ENCODE measurements at regions of chr15 and their contacts with region 1.

Region 1: DNA sequence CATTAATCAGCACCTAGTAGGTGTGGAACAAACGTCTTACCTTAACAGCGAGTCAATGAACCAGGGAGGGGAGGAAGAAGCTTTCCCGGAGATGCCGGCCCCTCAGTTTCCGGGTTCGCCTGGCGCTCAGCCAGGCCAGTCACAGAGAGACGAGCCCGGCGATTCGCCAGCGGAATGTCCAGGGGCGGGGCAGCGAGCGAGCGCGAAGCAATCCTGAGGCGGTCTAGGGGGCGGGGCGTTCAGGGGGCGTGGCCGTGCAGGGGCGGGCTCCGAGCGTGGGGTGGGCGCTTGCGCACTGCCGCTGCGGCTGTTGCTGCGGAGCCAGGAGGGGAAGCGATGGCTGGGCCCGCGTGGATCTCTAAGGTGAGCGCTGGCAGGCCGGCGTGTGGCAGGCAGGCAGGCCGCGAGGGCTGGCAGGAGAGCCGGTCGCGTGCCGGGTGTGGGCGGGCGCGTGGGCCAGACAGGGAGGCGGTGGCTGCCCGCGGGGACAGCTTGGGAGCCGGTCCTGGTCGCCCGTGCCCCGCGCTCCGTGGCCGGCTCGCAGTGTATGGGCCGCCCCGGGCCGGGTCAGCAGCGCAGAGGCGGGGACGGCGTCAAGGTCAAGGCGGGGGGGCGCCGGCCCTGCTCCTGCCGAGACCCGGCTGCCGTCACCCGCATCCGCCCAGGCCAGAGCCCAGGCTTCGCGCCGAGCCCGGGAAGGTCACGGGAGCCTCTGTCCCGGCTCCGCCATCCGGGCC is at the start of gene IDH3A:
- DNase-seq: peak; percentile 99 to 100 (median 100)
- ATAC-seq: peak; percentile 97
- H3K4me3 ChIP-seq: peak within 1 kb of the TSS; percentile 72 to 81
- H3K4me3 Mint-ChIP-seq: peak within 1 kb of the TSS; percentile 91
- H3K27ac ChIP-seq: peak within 1 kb of the TSS; percentile 65 to 67
- H3K27ac Mint-ChIP-seq: peak within 1 kb of the TSS; percentile 91
- H3K4me1 ChIP-seq: peaks cover 18% of the 10 kb centered on the region
- H3K4me1 Mint-ChIP-seq: peaks cover 44% of the 10 kb centered on the region
- H3K27me3 ChIP-seq: no peaks in the 10 kb centered on the region
- H3K27me3 Mint-ChIP-seq: no peaks in the 10 kb centered on the region
- CTCF ChIP-seq: no peak
- total RNA-seq, gene IDH3A: 54.4 to 61.0 TPM

Region 2: DNA sequence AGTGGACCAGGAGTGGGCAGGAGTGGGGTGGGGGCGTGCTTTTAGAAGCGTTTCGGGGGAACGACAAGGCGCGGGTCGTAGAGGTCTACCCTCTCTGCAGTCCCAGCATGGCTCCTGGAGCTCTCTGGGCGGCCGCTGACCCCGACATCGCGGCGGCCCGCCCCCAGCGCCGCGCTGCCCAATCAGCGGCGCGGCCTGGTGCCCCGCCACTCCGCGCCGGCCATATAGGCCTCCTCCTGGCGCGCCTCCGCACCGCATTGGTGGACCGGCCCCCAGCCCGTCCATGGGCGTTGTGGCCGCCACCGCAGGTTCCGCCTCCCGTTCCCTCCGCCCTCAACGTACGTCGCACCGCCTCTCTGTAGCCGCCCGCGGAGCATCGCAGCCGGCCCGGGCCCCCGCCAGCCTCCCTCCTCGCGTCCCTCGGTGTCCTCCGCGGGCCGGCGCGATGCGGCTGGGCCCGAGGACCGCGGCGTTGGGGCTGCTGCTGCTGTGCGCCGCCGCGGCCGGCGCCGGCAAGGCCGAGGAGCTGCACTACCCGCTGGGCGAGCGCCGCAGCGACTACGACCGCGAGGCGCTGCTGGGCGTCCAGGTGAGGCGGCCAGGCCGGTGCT is 1217.7 kb before region 1 on chr15 and contains the start of gene RCN2:
- CTCF ChIA-PET with region 1: no interaction called
- POLR2A ChIA-PET with region 1: no interaction called
- intact Hi-C with region 1: loop called in 1 of 2 experiments (anchors 5 kb)
- DNase-seq: peak; percentile 81 to 96 (median 93)
- ATAC-seq: peak; percentile 97
- H3K4me3 ChIP-seq: peak within 1 kb of the TSS; percentile 62 to 63
- H3K4me3 Mint-ChIP-seq: peak within 1 kb of the TSS; percentile 90
- H3K27ac ChIP-seq: peak within 1 kb of the TSS; percentile 63 to 65
- H3K27ac Mint-ChIP-seq: peak within 1 kb of the TSS; percentile 91
- H3K4me1 ChIP-seq: peaks cover 24% of the 10 kb centered on the region
- H3K4me1 Mint-ChIP-seq: peaks cover 34% of the 10 kb centered on the region
- H3K27me3 ChIP-seq: no peaks in the 10 kb centered on the region
- H3K27me3 Mint-ChIP-seq: no peaks in the 10 kb centered on the region
- CTCF ChIP-seq: no peak
- total RNA-seq, gene RCN2: 25.9 to 29.7 TPM

Region 3: GRCh38 chr15:77988347-77989295 is 160.6 kb before region 1 on chr15:
- CTCF ChIA-PET with region 1: no interaction called
- POLR2A ChIA-PET with region 1: no interaction called
- intact Hi-C with region 1: no loop called
- DNase-seq: no peak
- ATAC-seq: no peak
- H3K4me3 ChIP-seq: no peak overlapping the region
- H3K4me3 Mint-ChIP-seq: no peak overlapping the region
- H3K27ac ChIP-seq: no peak overlapping the region
- H3K27ac Mint-ChIP-seq: no peak overlapping the region
- H3K4me1 ChIP-seq: peaks cover 13% of the 10 kb centered on the region
- H3K4me1 Mint-ChIP-seq: peaks cover 25% of the 10 kb centered on the region
- H3K27me3 ChIP-seq: no peaks in the 10 kb centered on the region
- H3K27me3 Mint-ChIP-seq: no peaks in the 10 kb centered on the region
- CTCF ChIP-seq: no peak

Region 4: DNA sequence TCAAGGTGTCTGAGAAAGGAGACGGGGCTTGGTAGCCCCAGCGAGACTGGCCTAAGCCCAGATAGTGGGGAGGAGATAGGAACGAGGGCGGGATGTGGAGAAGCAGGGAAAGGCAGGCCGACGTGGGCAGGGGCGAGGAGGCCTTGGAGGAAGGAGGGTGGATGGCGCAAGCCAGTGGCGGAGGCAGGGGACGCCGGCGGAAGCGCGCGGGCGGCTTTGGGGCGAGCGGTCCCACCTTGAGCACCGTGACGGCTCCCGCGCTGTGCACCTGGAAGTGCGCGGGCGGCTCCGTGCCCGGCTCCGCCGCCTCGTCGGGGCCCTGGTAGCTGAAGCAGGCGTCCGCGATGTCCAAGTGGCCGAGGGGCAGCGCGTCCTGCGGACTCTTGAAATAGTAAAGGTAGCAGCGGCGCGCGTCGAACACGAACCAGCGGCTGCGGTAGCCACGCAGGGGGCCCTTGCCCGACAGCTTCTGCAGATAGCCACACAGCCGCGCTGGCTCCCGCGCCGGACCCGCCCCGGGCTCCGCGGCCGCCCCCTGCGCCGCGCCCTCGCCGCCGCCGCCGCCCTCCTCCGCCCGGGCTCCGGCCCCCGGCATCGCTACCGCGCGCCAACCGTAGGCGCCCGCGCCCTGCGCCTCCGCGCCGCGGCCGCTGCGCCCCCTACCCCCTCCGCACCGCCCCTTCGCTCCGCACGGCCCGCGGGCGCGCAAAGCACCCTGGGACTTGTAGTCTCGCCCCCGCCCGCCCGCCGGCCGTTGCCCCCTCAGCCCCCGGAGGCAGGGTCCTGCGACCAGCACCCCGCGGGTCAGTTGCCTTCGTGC is 72.0 kb before region 1 on chr15 and contains the start of gene TBC1D2B:
- CTCF ChIA-PET with region 1: no interaction called
- POLR2A ChIA-PET with region 1: no interaction called
- intact Hi-C with region 1: loop called (anchors 1 kb)
- DNase-seq: peak in 8 of 9 experiments; percentile 56 to 86 (median 71)
- ATAC-seq: peak; percentile 80
- H3K4me3 ChIP-seq: peak within 1 kb of the TSS; percentile 87 to 90
- H3K4me3 Mint-ChIP-seq: peak within 1 kb of the TSS; percentile 100
- H3K27ac ChIP-seq: peak within 1 kb of the TSS; percentile 57 to 76
- H3K27ac Mint-ChIP-seq: peak within 1 kb of the TSS; percentile 99
- H3K4me1 ChIP-seq: peaks cover 35% of the 10 kb centered on the region
- H3K4me1 Mint-ChIP-seq: peaks cover 46% of the 10 kb centered on the region
- H3K27me3 ChIP-seq: no peaks in the 10 kb centered on the region
- H3K27me3 Mint-ChIP-seq: no peaks in the 10 kb centered on the region
- CTCF ChIP-seq: no peak
- total RNA-seq, gene TBC1D2B: 88.7 to 101 TPM

Region 5: GRCh38 chr15:78120523-78120922 is 28.7 kb before region 1 on chr15:
- CTCF ChIA-PET with region 1: no interaction called
- POLR2A ChIA-PET with region 1: no interaction called
- intact Hi-C with region 1: no loop called
- DNase-seq: no peak
- ATAC-seq: no peak
- H3K4me3 ChIP-seq: no peak overlapping the region
- H3K4me3 Mint-ChIP-seq: no peak overlapping the region
- H3K27ac ChIP-seq: no peak overlapping the region
- H3K27ac Mint-ChIP-seq: no peak overlapping the region
- H3K4me1 ChIP-seq: no peaks in the 10 kb centered on the region
- H3K4me1 Mint-ChIP-seq: no peaks in the 10 kb centered on the region
- H3K27me3 ChIP-seq: no peaks in the 10 kb centered on the region
- H3K27me3 Mint-ChIP-seq: no peaks in the 10 kb centered on the region
- CTCF ChIP-seq: no peak

Region 6: GRCh38 chr15:78264304-78265136 is 115.3 kb after region 1 on chr15 and contains the start of gene DNAJA4:
- CTCF ChIA-PET with region 1: no interaction called
- POLR2A ChIA-PET with region 1: no interaction called
- intact Hi-C with region 1: loop called in 1 of 2 experiments (anchors 1 kb)
- DNase-seq: peak; percentile 29 to 81 (median 63)
- ATAC-seq: peak; percentile 78
- H3K4me3 ChIP-seq: peak within 1 kb of the TSS; percentile 54 to 71
- H3K4me3 Mint-ChIP-seq: peak within 1 kb of the TSS; percentile 91
- H3K27ac ChIP-seq: peak within 1 kb of the TSS; percentile 67 to 77
- H3K27ac Mint-ChIP-seq: peak within 1 kb of the TSS; percentile 96
- H3K4me1 ChIP-seq: peaks cover 15% of the 10 kb centered on the region
- H3K4me1 Mint-ChIP-seq: peaks cover 37% of the 10 kb centered on the region
- H3K27me3 ChIP-seq: no peaks in the 10 kb centered on the region
- H3K27me3 Mint-ChIP-seq: no peaks in the 10 kb centered on the region
- CTCF ChIP-seq: no peak
- total RNA-seq, gene DNAJA4: 48.9 to 52.1 TPM

Region 7: GRCh38 chr15:78299101-78299930 is 150.1 kb after region 1 on chr15 and contains the start of gene SKIC8:
- CTCF ChIA-PET with region 1: no interaction called
- POLR2A ChIA-PET with region 1: interaction called, 4 read pairs
- intact Hi-C with region 1: loop called in 1 of 2 experiments (anchors 1 kb)
- DNase-seq: peak; percentile 80 to 95 (median 89)
- ATAC-seq: peak; percentile 98
- H3K4me3 ChIP-seq: peak within 1 kb of the TSS; percentile 89 to 99
- H3K4me3 Mint-ChIP-seq: peak within 1 kb of the TSS; percentile 98
- H3K27ac ChIP-seq: peak within 1 kb of the TSS; percentile 73 to 84
- H3K27ac Mint-ChIP-seq: peak within 1 kb of the TSS; percentile 96
- H3K4me1 ChIP-seq: peaks cover 12% of the 10 kb centered on the region
- H3K4me1 Mint-ChIP-seq: peaks cover 34% of the 10 kb centered on the region
- H3K27me3 ChIP-seq: no peaks in the 10 kb centered on the region
- H3K27me3 Mint-ChIP-seq: no peaks in the 10 kb centered on the region
- CTCF ChIP-seq: no peak
- total RNA-seq, gene SKIC8: 18.4 to 21.2 TPM

Region 8: GRCh38 chr15:78399091-78399490 is 249.9 kb after region 1 on chr15:
- CTCF ChIA-PET with region 1: no interaction called
- POLR2A ChIA-PET with region 1: no interaction called
- intact Hi-C with region 1: no loop called
- DNase-seq: no peak
- ATAC-seq: no peak
- H3K4me3 ChIP-seq: no peak overlapping the region
- H3K4me3 Mint-ChIP-seq: no peak overlapping the region
- H3K27ac ChIP-seq: no peak overlapping the region
- H3K27ac Mint-ChIP-seq: no peak overlapping the region
- H3K4me1 ChIP-seq: no peaks in the 10 kb centered on the region
- H3K4me1 Mint-ChIP-seq: no peaks in the 10 kb centered on the region
- H3K27me3 ChIP-seq: no peaks in the 10 kb centered on the region
- H3K27me3 Mint-ChIP-seq: peaks cover 5% of the 10 kb centered on the region
- CTCF ChIP-seq: no peak

Region 9: GRCh38 chr15:78540141-78540928 is 391.1 kb after region 1 on chr15 and contains the start of gene PSMA4:
- CTCF ChIA-PET with region 1: no interaction called
- POLR2A ChIA-PET with region 1: no interaction called
- intact Hi-C with region 1: loop called in 1 of 2 experiments (anchors 10 kb)
- DNase-seq: peak; percentile 86 to 98 (median 95)
- ATAC-seq: peak; percentile 83
- H3K4me3 ChIP-seq: peak within 1 kb of the TSS; percentile 85 to 96
- H3K4me3 Mint-ChIP-seq: peak within 1 kb of the TSS; percentile 88
- H3K27ac ChIP-seq: peak within 1 kb of the TSS; percentile 89 to 97
- H3K27ac Mint-ChIP-seq: peak within 1 kb of the TSS; percentile 95
- H3K4me1 ChIP-seq: peaks cover 28% of the 10 kb centered on the region
- H3K4me1 Mint-ChIP-seq: peaks cover 31% of the 10 kb centered on the region
- H3K27me3 ChIP-seq: no peaks in the 10 kb centered on the region
- H3K27me3 Mint-ChIP-seq: no peaks in the 10 kb centered on the region
- CTCF ChIP-seq: no peak
- total RNA-seq, gene PSMA4: 72.8 to 79.4 TPM